Ascending aorta (tissue), 2 donors: ENCODE measurements at regions of chr2 and their contacts with region 1.

Region 1: DNA sequence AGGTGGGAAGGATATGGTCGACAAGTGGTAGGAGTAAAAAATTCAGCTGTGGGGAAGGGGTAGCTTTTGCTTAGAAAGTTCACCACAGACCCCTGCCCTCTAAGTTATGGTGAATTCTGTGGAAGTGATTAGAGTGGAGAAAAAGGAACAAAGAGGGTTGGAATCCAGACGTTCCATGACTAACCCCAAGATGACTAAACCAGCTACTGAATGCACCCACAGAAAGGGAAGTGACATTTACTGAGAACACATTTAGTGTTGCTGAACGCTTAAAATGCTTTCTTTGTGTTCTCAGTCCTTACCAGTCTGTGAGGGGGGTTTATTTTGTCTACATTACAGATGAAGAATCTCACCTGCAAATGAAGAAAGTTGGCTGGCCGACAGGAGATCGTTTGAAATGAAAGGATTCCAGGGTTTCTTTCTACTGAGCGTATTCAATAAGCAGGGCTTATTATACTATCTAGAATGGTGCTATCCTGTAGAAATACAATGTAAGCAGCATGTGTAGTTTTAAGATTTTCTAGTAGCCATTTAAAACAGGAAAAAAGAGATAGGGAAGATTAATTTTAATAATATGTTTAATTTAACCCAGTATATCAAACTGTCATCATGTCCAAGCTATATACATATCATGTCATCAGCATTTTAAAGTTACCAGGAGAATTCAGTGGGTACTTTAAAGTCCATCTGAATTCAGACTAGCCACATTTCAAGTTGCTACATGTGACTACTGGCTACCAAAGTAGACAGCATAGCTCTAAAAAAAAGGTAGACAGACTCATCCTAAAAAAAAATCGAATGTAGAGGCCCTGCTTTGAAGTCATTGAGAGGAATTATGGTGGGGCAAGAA is 60.1 kb downstream of the LIMS1 start:
- DNase-seq: no peak
- H3K4me3 ChIP-seq: peak overlapping the region in 1 of 2 donors; percentile 10
- H3K27ac ChIP-seq: peak overlapping the region; percentile 85 to 87
- H3K4me1 ChIP-seq: peaks cover 15 to 36% of the 10 kb centered on the region in 2 donors
- H3K27me3 ChIP-seq: no peaks in the 10 kb centered on the region
- CTCF ChIP-seq: no peak

Region 2: DNA sequence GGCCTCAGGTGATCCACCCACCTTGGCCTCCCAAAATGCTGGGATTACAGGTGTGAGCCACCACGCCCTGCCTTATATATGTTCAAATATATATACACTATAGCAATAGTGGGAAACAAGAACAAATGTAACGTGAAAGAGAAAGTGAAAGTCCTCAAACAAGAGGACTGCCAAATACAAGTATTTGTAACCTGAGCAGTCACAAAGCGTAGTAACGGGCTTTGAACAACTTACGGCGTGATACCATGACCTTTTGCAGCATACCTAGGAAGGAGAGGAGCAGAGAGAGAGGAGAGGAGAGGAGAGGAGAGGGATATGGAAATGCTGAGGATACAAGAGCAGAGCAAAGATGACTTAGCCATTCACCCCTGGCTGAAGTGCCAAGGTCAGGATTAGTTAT is 881.5 kb before region 1 on chr2:
- intact Hi-C with region 1: no loop called
- DNase-seq: no peak
- H3K4me3 ChIP-seq: no peak overlapping the region
- H3K27ac ChIP-seq: no peak overlapping the region
- H3K4me1 ChIP-seq: no peaks in the 10 kb centered on the region
- H3K27me3 ChIP-seq: no peaks in the 10 kb centered on the region
- CTCF ChIP-seq: no peak

Region 3: DNA sequence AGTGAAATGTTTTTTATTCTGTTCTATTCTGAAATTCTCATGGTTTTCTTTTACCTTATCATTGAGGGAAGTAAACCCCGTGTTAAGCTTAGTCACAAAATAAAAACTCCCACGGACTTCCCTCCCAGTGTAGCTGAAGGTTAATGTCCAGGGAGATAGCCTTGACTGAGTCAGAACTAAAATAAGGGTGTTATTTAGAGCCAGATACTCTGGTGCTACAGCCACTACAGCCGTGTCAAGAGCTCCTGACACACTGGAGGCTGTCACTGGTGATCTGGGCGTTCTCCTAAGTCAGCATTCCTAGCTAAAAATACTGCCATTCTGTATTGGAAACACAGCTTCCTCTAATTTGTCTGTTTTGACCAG is 42.9 kb after region 1 on chr2:
- intact Hi-C with region 1: loop called (anchors 5 kb)
- DNase-seq: peak; percentile 50 to 83
- H3K4me3 ChIP-seq: peak overlapping the region in 1 of 2 donors; percentile 4
- H3K27ac ChIP-seq: peak overlapping the region; percentile 46 to 80
- H3K4me1 ChIP-seq: peaks cover 11 to 47% of the 10 kb centered on the region in 2 donors
- H3K27me3 ChIP-seq: no peaks in the 10 kb centered on the region
- CTCF ChIP-seq: no peak

Region 4: DNA sequence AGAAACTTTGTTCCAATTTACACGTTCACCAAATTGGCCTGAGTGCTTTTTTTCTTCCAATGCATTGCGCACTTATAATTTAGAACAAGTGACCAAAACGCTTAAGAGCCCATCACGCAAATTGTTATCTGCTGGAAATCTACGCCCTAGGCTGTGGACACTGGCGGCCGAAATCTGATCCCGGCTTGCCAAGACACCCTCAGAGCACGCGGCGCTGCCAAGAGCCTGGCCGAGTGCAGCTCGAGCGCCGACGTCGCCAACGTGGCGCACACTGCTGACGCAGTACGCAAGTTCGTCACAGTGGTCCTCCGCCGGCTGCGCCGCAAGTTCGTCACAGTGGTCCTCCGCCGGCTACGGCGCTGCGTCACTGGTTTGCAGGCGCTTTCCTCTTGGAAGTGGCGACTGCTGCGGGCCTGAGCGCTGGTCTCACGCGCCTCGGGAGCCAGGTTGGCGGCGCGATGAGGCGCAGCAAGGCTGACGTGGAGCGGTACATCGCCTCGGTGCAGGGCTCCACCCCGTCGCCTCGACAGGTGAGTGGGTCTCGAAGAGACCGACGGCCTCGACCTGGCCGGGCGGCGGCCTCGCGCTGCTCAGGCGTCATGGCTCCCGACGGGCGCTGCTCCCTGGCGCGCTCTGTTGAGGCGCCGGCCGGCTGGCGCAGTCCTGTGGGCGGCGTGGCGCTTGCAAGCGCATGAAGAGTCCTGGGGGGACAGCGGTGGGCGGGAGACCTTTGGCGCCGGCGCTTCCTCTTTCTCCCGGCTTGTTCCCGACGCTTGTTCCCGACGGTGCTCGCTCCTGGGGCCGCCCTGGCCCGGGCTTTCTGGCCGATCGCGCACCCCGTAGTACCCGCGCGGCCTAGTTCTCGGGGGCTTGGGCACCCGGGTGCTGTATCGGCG is 125.0 kb after region 1 on chr2 and contains the start of gene RANBP2:
- intact Hi-C with region 1: loop called (anchors 10 kb)
- DNase-seq: peak; percentile 75 to 97
- H3K4me3 ChIP-seq: peak within 1 kb of the TSS; percentile 91 to 98
- H3K27ac ChIP-seq: peak within 1 kb of the TSS; percentile 99 to 100
- H3K4me1 ChIP-seq: peaks cover 0 to 7% of the 10 kb centered on the region in 2 donors
- H3K27me3 ChIP-seq: no peaks in the 10 kb centered on the region
- CTCF ChIP-seq: no peak
- total RNA-seq, gene RANBP2: 15.5 TPM

Region 5: DNA sequence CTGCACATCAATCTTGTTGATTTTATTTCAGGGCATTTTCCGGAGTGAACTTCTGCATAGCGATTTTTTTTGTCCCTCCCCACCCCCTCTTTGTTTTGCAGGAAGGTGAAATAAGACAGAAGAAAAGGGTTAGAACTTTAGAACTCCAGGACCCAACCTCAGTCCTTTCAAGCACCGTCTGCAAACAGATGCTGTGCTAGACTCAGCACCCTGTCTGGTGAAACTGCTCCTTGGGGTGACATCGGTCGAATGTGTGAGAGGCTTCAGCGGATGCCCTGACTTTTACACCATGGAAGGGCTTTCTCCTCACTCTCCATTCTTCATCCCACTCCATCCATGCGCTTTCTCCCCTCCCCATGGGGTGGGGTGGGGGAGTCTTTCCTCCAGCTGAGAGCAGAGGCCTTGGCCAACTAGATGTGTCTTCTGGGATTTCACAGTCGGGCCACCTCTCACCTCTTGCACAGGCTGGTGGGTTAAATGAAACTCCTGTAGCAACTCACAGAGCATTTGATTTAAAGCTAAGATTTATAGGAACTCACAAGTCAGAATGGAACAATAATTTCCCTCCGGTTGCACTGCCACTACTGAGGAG is 438.0 kb after region 1 on chr2:
- intact Hi-C with region 1: no loop called
- DNase-seq: no peak
- H3K4me3 ChIP-seq: peak overlapping the region; percentile 57 to 62
- H3K27ac ChIP-seq: no peak overlapping the region
- H3K4me1 ChIP-seq: no peaks in the 10 kb centered on the region
- H3K27me3 ChIP-seq: no peaks in the 10 kb centered on the region
- CTCF ChIP-seq: no peak